Activated naive CD4-positive, alpha-beta T cell treated with anti-CD3 and anti-CD28 coated beads for 36 hours (primary cell): ENCODE measurements at regions of chr10 and their contacts with region 1.

Region 1: DNA sequence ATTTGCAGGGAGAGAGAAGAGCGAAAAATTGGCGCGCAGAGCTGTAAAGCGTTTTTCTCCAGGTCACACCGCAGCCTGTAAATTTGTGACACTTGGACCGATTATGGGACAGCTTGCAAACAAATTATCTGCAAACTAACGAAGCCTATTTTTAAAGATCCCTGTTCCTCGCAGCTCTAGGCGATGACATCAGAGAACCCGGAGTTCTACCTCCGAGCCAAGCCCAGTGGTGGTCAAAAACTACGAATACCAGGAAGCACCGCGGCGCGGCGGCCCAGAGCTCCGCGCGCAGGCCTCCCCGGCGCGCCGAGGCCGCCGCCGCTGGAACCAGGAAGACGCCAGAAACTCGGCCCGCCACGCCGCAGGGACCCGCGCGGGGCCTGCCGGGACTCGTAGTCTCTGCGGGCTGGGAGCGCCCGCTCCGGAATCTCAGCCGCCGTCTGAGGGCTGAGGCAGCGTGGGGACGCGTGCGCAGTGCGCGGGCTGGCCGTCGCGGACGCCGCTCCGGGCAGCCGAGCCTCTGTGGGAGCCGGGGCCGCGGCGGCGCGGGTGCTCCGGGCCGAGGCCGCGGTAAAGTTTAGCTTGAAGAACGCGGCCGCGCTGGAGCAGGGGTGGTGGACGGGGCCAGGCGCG is at the start of gene PLEKHA1:
- DNase-seq: peak; percentile 93
- H3K4me3 Mint-ChIP-seq: peak within 1 kb of the TSS; percentile 90
- H3K27ac Mint-ChIP-seq: peak within 1 kb of the TSS; percentile 94
- H3K4me1 Mint-ChIP-seq: peaks cover 37% of the 10 kb centered on the region
- H3K27me3 Mint-ChIP-seq: no peaks in the 10 kb centered on the region
- total RNA-seq, gene PLEKHA1: 17.6 to 17.9 TPM

Region 2: DNA sequence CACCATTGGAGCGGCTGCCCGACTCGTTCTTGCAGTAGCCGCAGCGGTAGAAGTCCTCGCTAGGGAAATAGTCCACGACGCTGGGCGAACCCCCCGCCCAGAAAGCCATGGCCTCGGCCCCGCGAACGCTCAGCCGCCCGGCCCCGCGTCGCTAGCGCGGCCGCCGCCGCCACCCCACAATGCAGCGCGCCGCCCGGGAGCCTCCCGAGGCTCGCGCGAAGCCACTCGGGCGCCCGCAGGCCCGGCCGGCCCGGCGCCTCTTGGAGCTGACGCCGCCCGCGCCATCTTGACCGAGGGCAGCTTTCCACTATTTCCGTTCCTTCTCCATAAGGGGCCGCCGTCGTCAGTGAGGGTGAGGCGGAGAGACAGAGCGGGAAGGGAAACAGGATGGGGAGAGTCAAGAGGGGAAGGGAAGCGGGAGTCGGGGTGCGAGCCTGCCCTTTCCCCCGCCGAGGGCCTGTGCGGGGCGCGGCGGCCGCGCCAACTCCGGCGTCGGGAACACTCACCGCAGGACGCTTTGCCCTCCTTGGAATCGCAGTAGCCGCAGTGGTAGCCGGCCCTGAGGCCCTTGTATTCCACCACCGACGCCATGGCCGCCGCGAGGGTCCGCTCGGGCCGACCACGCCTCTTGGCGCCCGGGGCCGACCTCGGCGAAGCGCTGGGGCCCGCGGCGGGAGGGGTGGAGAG is 446.4 kb before region 1 on chr10 and contains the start of gene ATE1:
- CTCF ChIA-PET with region 1: no interaction called
- intact Hi-C with region 1: loop called (anchors 1 kb)
- DNase-seq: peak; percentile 84
- H3K4me3 Mint-ChIP-seq: peak within 1 kb of the TSS; percentile 89
- H3K27ac Mint-ChIP-seq: peak within 1 kb of the TSS; percentile 94
- H3K4me1 Mint-ChIP-seq: peaks cover 21% of the 10 kb centered on the region
- H3K27me3 Mint-ChIP-seq: no peaks in the 10 kb centered on the region
- total RNA-seq, gene ATE1: 13.6 to 17.5 TPM

Region 3: DNA sequence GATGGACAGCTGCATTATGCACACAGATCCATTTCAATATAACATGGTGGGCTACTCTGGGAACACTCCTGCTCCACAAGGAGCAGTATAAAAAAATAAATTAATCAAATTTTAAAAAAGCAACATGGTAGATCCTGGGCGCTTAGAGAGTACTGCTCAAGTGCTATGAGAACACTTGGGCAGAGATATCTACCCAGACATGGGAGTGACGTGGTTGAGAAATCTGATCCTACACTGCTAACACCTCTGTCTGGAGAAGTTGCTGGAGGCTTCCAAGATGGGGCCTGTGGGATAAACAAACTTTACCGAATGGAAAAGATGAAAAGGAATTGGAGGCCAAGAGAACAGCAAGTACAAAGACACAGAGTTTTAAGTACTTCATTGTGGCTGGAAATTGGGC is 408.4 kb before region 1 on chr10:
- CTCF ChIA-PET with region 1: no interaction called
- intact Hi-C with region 1: no loop called
- DNase-seq: no peak
- H3K4me3 Mint-ChIP-seq: no peak overlapping the region
- H3K27ac Mint-ChIP-seq: no peak overlapping the region
- H3K4me1 Mint-ChIP-seq: no peaks in the 10 kb centered on the region
- H3K27me3 Mint-ChIP-seq: no peaks in the 10 kb centered on the region

Region 4: GRCh38 chr10:122307669-122308486 is 66.5 kb before region 1 on chr10:
- CTCF ChIA-PET with region 1: no interaction called
- intact Hi-C with region 1: no loop called
- DNase-seq: no peak
- H3K4me3 Mint-ChIP-seq: no peak overlapping the region
- H3K27ac Mint-ChIP-seq: no peak overlapping the region
- H3K4me1 Mint-ChIP-seq: no peaks in the 10 kb centered on the region
- H3K27me3 Mint-ChIP-seq: no peaks in the 10 kb centered on the region

Region 5: DNA sequence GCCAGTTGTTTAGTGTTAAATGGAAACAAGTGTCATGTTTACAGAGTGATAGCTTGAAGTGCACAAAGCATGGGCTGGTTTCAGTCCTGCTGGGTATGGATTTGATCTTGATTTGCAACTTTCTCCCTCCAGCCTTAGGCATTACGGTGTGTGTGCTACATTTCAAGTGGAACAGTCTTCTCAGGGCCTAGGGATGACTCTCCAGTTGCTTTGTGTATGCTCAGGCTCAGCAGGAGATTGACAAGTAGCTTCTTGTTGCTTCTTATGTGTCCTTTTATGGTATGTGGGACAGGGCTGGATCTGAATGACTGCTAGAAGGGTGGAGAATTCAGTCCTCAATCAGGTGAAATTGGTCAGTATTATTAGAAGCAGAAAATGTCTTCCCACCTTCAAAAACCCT is 51.2 kb before region 1 on chr10:
- CTCF ChIA-PET with region 1: no interaction called
- intact Hi-C with region 1: no loop called
- DNase-seq: no peak
- H3K4me3 Mint-ChIP-seq: no peak overlapping the region
- H3K27ac Mint-ChIP-seq: no peak overlapping the region
- H3K4me1 Mint-ChIP-seq: no peaks in the 10 kb centered on the region
- H3K27me3 Mint-ChIP-seq: peaks cover 14% of the 10 kb centered on the region

Region 6: GRCh38 chr10:122388287-122388997 is 14.1 kb after region 1 on chr10:
- CTCF ChIA-PET with region 1: interaction called, 3 read pairs
- intact Hi-C with region 1: loop called (anchors 1 kb)
- DNase-seq: peak; percentile 73
- H3K4me3 Mint-ChIP-seq: no peak overlapping the region
- H3K27ac Mint-ChIP-seq: peak overlapping the region; percentile 80
- H3K4me1 Mint-ChIP-seq: peaks cover 57% of the 10 kb centered on the region
- H3K27me3 Mint-ChIP-seq: no peaks in the 10 kb centered on the region

Region 7: GRCh38 chr10:122419876-122420623 is 45.7 kb after region 1 on chr10:
- CTCF ChIA-PET with region 1: no interaction called
- intact Hi-C with region 1: loop called (anchors 1 kb)
- DNase-seq: no peak
- H3K4me3 Mint-ChIP-seq: no peak overlapping the region
- H3K27ac Mint-ChIP-seq: no peak overlapping the region
- H3K4me1 Mint-ChIP-seq: peaks cover 74% of the 10 kb centered on the region
- H3K27me3 Mint-ChIP-seq: no peaks in the 10 kb centered on the region

Region 8: GRCh38 chr10:122953827-122954730 is 579.7 kb after region 1 on chr10 and contains the start of gene C10orf88:
- CTCF ChIA-PET with region 1: no interaction called
- intact Hi-C with region 1: loop called (anchors 10 kb)
- DNase-seq: peak; percentile 97
- H3K4me3 Mint-ChIP-seq: peak within 1 kb of the TSS; percentile 81
- H3K27ac Mint-ChIP-seq: peak within 1 kb of the TSS; percentile 82
- H3K4me1 Mint-ChIP-seq: peaks cover 28% of the 10 kb centered on the region
- H3K27me3 Mint-ChIP-seq: no peaks in the 10 kb centered on the region
- total RNA-seq, gene C10orf88: 4.2 to 5.2 TPM

Region 9: DNA sequence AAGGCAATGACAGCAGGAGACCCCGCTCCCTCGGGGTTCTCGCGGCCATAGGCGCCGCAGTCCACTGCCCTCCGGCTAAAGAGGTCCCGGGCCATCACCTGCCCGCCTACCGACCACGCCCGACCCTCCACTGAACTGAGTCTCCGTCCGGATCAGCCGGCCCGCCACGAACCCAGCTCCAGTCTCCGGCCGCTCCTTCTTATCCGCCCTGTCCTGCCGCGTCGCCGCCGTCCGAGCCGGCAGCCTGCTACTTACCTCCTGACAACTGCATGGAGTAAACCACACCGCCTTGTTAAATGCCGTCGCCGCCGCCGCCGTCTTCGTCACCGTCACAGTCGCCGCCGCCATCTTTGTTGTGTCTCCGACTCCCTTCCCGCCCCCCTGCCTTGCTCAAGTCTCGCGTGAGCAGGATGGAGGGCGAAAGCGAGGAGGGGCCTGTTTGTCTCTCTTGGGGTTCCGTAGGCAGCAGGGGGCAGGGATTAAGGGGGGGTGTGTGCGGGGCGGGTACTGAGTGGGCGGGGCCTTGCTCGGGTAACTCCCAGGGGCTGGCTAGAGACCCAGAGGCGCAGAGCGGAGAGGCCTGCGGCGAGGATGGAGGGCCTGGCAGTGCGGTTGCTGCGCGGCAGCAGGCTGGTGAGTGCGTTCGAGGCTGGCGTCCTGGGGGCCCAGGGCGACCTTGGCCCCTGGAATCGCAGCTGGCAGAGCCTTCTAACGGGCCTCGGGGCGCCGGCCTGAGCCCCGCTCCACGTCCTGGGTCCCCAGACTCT is 634.3 kb after region 1 on chr10 and contains the starts of genes ACADSB and IKZF5:
- CTCF ChIA-PET with region 1: no interaction called
- intact Hi-C with region 1: loop called (anchors 1 kb)
- DNase-seq: peak; percentile 98
- H3K4me3 Mint-ChIP-seq: peak within 1 kb of the TSS; percentile 100
- H3K27ac Mint-ChIP-seq: peak within 1 kb of the TSS; percentile 98
- H3K4me1 Mint-ChIP-seq: peaks cover 34% of the 10 kb centered on the region
- H3K27me3 Mint-ChIP-seq: no peaks in the 10 kb centered on the region
- total RNA-seq, gene ACADSB: 19.8 to 21.8 TPM
- total RNA-seq, gene IKZF5: 15.3 to 16.2 TPM